Endothelial cell of umbilical vein (primary cell): ENCODE measurements at regions of chr6 and their contacts with region 1.

Region 1: GRCh38 chr6:135291288-135292116 is 110.4 kb downstream of the MYB start:
- DNase-seq: peak; percentile 73
- H3K4me3 ChIP-seq: no peak overlapping the region
- H3K27ac ChIP-seq: no peak overlapping the region
- H3K4me1 ChIP-seq: peaks cover 17% of the 10 kb centered on the region
- H3K27me3 ChIP-seq: no peaks in the 10 kb centered on the region
- CTCF ChIP-seq: no peak
- POLR2A ChIP-seq: peak; percentile 44

Region 2: DNA sequence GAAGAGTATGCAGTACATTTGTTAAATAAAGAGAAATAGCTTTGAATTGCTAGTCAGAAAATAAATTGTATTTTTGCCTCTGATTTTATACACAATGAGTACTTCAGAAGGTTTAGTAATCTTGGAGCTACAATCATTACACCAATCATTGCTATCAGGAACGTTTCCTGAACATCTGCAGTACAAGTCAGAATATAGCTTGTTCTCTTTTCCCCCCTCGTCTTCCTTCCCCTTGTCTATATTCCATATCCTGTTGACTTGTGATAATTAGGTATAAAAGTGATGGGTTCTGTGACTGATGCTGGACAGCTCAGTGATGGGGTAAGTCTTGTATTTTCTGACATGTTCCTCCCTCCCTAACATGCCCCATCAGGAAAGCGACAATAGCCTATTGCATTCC is 112.1 kb after region 1 on chr6:
- CTCF ChIA-PET with region 1: no interaction called
- POLR2A ChIA-PET with region 1: no interaction called
- dilution Hi-C with region 1: no loop called
- intact Hi-C with region 1: loop called (anchors 10 kb)
- DNase-seq: peak; percentile 42
- H3K4me3 ChIP-seq: no peak overlapping the region
- H3K27ac ChIP-seq: no peak overlapping the region
- H3K4me1 ChIP-seq: peaks cover 8% of the 10 kb centered on the region
- H3K27me3 ChIP-seq: no peaks in the 10 kb centered on the region
- CTCF ChIP-seq: no peak
- POLR2A ChIP-seq: no peak